Heart left ventricle (tissue), 16 donors: ENCODE measurements at regions of chr1 and their contacts with region 1.

Region 1: GRCh38 chr1:157580179-157580827 is 17.6 kb downstream of the FCRL4 start:
- DNase-seq: no peak
- ATAC-seq: peak in 1 of 4 donors; percentile 26
- H3K4me3 ChIP-seq: no peak overlapping the region
- H3K27ac ChIP-seq: no peak overlapping the region
- H3K4me1 ChIP-seq: no peaks in the 10 kb centered on the region
- H3K27me3 ChIP-seq: peaks cover 0 to 21% (median 0%) of the 10 kb centered on the region in 9 donors
- CTCF ChIP-seq: peak; percentile 56 to 78 (median 67)
- POLR2A ChIP-seq: no peak

Region 2: DNA sequence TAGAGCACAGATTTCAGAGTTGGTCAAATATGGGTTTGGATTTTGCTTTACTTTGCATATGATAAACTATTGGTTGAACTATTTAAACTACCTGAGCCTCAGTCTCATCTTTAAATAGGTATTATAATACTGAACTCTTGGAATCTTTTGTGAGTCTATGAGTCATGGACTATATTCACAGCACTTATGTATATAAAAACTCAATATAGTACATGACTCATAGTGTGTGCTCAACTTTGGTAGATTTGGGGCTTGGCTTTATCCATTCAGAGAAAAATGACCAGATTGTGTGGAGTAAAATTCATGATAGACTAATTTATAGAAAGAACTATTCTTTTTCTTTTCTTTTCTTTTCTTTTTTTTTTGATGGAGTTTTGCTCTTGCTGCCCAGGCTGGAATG is 91.6 kb after region 1 on chr1:
- intact Hi-C with region 1: no loop called
- DNase-seq: no peak
- ATAC-seq: no peak
- H3K4me3 ChIP-seq: no peak overlapping the region
- H3K27ac ChIP-seq: no peak overlapping the region
- H3K4me1 ChIP-seq: no peaks in the 10 kb centered on the region
- H3K27me3 ChIP-seq: no peaks in the 10 kb centered on the region
- CTCF ChIP-seq: no peak
- POLR2A ChIP-seq: no peak

Region 3: GRCh38 chr1:157691285-157691920 is 111.1 kb after region 1 on chr1:
- intact Hi-C with region 1: loop called in 1 of 10 experiments (anchors 5 kb)
- DNase-seq: no peak
- ATAC-seq: no peak
- H3K4me3 ChIP-seq: no peak overlapping the region
- H3K27ac ChIP-seq: no peak overlapping the region
- H3K4me1 ChIP-seq: no peaks in the 10 kb centered on the region
- H3K27me3 ChIP-seq: peaks cover 0 to 6% (median 0%) of the 10 kb centered on the region in 9 donors
- CTCF ChIP-seq: peak in 7 of 12 donors; percentile 16 to 42 (median 31)
- POLR2A ChIP-seq: no peak

Region 4: DNA sequence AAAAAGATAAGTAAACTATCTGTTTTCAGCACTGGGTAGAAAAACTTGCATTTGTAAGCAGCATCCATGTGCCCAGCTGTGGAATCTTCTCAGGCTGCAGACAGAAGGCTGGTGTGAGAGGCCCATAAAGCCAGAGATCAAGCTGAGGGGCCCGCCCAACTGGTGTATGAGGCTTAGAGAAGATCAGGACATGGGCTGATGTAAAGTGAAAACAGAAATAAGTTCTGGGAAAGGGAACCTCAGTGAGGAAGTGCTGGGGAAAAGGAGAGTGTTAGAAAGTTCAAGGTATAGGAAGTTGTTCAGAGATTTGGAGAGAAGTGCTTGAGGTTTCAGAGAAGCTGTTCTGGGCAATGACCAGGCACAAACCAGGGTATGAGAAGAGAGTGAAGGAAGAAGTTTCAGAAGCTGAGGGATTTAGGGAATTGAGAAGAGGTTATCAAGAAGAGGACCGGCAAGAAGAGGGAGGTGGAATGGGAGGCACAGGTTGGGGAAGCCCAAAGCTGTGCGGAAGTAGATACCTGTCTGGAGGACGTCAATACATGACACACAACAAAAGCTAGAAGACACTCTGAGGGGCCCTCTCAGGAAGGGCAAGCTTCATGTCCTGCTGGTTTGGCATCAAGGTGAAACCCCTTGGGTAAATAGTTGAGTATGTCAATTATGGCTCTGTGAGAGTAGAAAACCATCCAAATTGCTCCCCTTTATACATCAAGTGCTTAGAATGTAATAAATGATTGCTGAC is 264.0 kb after region 1 on chr1:
- intact Hi-C with region 1: no loop called
- DNase-seq: peak in 1 of 5 donors; percentile 44
- ATAC-seq: peak in 2 of 4 donors; percentile 37 to 51
- H3K4me3 ChIP-seq: no peak overlapping the region
- H3K27ac ChIP-seq: peak overlapping the region in 1 of 12 donors; percentile 68
- H3K4me1 ChIP-seq: peaks cover 0 to 34% (median 0%) of the 10 kb centered on the region in 12 donors
- H3K27me3 ChIP-seq: peaks cover 0 to 7% (median 0%) of the 10 kb centered on the region in 9 donors
- CTCF ChIP-seq: no peak
- POLR2A ChIP-seq: no peak

Region 5: DNA sequence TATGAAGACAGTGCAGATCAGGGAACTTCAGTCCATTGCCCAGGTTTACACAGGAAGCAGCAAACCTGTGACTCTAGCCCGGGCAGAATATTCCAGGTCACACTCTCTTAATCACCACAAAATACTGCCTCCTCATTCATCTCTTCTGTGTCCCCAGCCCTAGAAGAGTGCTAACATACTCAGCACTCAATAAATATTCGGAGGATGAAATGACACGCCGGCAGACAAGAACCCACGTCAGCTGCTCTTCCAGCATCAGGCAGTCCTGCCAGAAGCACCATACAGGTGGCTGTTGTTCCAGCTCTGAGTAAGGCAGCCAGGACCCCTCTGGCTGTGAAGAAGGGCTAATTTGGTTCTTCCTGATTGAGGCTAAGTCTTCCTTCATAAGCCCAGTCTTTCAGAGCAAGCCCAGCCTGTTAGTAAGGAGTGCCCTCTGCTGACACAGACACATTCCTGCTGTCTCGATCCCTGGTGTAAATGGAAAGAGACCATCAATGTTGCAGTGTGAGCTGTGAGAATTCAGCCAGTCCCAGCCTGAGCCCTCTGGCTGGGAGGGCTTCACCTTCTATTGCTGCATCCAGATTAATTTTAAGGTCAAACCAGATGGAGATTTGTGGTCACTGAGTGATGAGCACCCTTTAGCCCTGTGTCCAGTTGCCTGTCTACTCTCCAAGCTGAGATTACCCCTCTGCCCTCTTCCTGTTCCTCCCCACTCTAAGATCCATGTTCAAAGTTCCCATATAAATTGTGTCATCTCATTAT is 368.2 kb after region 1 on chr1:
- intact Hi-C with region 1: loop called in 4 of 10 experiments (anchors 5 to 10 kb)
- DNase-seq: peak in 3 of 5 donors; percentile 17 to 31 (median 29)
- ATAC-seq: peak in 3 of 4 donors; percentile 73 to 87 (median 82)
- H3K4me3 ChIP-seq: no peak overlapping the region
- H3K27ac ChIP-seq: no peak overlapping the region
- H3K4me1 ChIP-seq: peaks cover 0 to 40% (median 0%) of the 10 kb centered on the region in 12 donors
- H3K27me3 ChIP-seq: peaks cover 0 to 17% (median 0%) of the 10 kb centered on the region in 9 donors
- CTCF ChIP-seq: peak; percentile 19 to 67 (median 60)
- POLR2A ChIP-seq: no peak

Region 6: GRCh38 chr1:157955857-157956256 is 375.6 kb after region 1 on chr1:
- intact Hi-C with region 1: loop called in 1 of 10 experiments (anchors 10 kb)
- DNase-seq: no peak
- ATAC-seq: peak in 1 of 4 donors; percentile 51
- H3K4me3 ChIP-seq: no peak overlapping the region
- H3K27ac ChIP-seq: peak overlapping the region in 1 of 12 donors; percentile 58
- H3K4me1 ChIP-seq: peaks cover 0 to 23% (median 0%) of the 10 kb centered on the region in 12 donors
- H3K27me3 ChIP-seq: peaks cover 0 to 17% (median 0%) of the 10 kb centered on the region in 9 donors
- CTCF ChIP-seq: no peak
- POLR2A ChIP-seq: no peak